ENCODE measurements at regions of chr11 and their contacts with region 1.

Region 1: DNA sequence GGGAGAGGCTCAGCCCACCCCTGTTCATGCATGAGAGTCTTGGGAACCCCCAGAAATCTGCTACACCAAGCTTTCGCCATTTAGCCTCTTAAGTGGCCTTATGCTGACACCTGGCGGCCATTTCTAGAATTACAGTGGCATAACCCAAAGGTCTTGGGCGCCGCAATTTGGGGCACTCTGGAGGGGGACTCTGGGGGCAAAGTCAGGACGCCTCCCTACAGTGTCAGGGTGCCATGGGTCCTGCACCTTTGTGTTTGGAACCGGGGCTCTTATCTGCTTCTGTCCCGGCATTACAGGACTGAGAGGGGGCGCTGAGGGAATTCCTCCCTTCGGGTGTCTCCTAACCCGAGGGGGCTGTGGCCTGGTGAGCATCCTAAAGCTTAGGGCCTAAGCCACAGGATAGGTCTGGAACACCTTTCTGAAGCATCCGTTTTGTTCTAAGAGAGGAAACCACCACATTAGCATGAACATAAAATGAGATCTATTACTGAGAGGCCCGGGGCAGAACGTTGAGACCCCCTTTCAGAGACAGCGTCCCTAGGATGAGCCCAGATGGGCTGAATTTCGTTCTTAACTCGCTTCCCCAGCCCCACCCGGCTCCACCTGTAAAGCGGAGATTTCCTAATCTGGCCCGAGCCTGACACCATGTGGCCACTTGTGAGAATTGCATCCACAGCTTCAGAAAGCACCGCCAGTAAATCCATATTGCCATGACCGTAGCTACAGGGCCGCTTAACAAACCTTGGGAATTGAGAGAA is 9.3 kb downstream of the INS start:
- DNase-seq: peak; percentile 87

Region 2: DNA sequence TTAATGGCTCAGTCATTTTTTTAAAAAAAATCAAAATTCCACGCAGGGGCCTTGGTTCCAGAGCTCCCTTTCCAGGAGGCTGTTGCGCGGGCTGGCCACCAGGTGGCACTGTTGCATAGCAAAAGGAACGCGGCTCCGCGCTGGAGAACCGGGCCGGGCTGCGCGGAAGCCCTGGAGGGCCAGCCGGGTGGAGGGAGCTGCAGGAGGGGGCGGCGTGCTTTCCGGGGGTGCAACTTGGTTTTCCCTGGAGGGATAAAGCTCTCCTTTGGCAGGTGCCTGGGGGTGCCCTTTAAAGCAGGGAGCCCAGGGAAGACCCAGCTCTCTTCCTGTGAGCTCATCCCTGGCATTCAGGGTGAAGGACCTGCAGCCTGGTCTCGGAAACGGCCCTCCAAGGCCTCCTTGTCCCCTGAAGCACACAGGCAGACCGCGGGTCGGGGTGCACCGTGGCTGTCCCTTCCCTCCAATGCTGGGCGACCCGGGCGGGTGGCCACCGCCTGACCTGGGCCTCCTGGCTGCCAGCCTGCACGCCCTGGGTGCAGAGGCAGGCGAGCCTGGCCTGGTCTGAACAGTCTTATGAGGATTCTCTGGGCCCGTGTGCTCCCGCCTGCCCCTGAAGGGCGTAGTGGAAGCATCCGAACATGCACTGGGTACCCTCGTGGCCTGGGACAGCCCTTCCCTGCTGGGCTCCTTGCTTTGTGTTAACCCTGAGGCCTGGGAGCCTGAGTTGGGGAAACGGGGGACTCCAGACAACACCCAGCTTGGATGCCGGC is 498.7 kb before region 1 on chr11:
- intact Hi-C with region 1: loop called (anchors 2 kb)
- DNase-seq: peak; percentile 88

Region 3: DNA sequence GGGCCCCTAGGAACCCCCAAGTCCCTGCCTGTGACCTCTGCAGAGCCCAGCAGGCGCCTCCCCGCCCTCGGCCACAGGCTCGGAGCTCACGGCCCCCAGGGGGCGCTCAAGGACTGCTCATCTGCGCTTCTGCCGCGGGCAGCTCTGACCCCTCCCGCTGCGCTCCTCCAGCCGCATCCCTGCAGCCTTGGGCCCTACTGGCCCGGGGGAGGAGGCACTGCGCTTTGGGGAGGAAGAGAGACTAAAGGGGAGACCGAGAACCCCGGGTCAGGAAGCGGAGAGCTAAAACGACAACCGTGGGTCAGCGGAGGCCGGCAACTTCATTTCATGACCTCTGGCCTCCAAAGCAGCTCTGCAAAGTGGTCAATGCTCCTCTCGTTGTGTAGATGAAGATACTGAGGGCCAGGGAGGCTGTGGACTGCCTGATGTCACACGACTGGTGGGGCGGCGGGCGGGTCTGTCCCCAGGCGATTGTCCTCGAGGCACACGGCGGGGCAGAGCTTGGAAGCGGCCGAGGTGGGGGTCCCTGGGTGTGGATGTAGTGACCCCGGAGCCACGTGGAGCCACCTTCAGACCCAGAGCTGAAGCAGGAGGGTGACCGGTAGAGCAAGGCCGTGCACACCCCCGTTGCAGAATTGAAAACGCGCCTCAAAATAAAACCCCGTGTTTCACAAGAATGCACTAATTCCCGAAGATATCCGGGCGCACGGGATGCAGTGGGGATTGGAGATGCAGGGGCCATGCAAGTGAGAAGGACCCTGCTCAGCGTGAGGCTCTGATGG is 457.4 kb before region 1 on chr11:
- intact Hi-C with region 1: loop called (anchors 2 kb)
- DNase-seq: peak; percentile 94

Region 4: DNA sequence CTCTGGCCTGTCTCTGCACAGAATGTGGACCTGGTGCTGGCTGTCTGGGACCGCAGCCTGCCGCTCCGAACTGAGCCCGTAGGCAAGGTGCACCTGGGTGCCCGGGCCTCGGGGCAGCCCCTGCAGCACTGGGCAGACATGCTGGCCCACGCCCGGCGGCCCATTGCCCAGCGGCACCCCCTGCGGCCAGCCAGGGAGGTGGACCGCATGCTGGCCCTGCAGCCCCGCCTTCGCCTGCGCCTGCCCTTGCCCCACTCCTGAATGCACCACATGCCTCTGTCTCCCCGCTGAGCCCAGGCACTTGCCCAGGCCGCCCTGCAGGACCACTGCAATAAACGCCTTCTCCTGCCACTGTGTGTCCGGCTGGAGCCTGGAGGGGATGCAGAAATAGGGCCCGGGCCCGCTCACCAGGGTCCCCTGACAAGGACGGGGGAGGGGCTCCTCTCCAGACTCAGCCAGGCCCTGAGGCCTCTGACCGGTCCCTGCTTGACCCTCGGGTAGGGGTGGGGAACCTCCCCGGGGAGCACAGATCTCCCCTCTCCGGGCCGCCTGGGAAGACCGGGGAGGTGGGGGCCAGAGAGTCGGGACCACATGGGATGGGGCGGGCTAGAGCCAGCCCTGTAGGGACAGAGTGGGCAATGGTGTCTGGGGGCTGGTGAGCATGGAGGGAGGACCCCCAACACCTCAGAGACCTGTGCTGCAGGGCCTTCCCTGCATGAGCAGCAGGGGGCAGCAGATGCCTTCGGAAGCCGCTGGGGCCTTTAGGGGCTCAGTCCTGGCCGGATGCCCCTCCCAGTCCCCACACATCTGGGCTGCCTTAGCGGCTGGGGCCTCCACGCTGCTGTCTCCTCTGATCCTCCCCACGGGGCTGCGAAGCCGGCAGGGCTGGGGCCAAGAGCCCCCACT is 314.3 kb before region 1 on chr11:
- intact Hi-C with region 1: loop called (anchors 2 kb)
- DNase-seq: no peak

Region 5: GRCh38 chr11:1882519-1883238 is 269.0 kb before region 1 on chr11:
- intact Hi-C with region 1: loop called (anchors 2 kb)
- DNase-seq: peak; percentile 92

Region 6: DNA sequence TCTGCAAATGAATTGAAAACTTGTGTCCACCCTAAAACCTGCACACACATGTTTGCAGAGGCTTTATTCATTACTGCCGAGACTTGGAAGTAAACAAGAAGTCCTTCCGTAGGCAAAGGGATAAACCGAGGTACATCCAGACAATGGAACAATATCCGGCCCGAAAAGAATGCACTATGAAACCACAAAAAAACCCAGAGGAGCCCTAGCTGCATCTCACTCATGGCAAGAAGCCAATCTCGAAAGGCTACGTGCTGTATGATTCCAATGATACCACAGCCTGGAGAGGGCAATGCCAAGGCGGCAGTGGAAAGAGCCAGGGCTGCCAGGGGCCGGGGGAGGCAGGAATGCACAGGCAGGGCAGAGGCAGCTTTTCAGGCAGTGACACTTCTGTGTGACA is 207.7 kb before region 1 on chr11:
- intact Hi-C with region 1: loop called (anchors 5 kb)
- DNase-seq: peak; percentile 63